Endothelial cell of umbilical vein (primary cell): ENCODE measurements at regions of chr11 and their contacts with region 1.

Region 1: DNA sequence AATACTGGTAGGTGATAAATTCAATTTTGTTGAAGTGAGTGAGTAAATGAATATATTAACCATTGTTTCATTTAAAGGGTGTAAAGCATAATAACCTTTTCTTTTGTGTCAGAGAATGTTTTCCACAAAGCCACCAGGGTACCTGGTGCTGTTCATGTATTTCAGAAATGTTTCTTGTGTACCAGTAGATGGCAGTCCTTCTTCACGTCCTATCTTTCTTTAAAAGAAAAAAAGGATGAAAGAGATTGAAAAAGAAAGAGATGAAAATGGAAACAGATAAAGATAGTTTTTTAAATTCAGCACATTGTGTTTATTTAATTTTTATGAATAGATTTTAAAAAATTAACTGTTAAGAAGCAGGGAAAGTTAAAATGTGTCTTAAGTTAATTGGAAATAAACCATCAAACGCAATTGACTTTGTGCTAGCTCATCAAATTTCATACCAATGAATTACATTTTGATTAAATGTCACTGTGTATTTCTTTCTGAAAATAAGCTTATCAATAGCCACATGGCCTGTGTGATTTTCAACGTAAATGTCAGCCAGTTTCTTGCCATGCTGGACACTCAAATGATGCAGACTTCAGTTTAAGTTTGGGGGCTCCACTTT is 65.5 kb upstream of the CHORDC1 start:
- DNase-seq: peak; percentile 41
- H3K4me3 ChIP-seq: no peak overlapping the region
- H3K27ac ChIP-seq: no peak overlapping the region
- H3K4me1 ChIP-seq: no peaks in the 10 kb centered on the region
- H3K27me3 ChIP-seq: no peaks in the 10 kb centered on the region
- CTCF ChIP-seq: peak in 1 of 2 donors; percentile 32
- POLR2A ChIP-seq: no peak

Region 2: GRCh38 chr11:90218606-90219005 is 69.7 kb before region 1 on chr11:
- CTCF ChIA-PET with region 1: no interaction called
- POLR2A ChIA-PET with region 1: no interaction called
- dilution Hi-C with region 1: no loop called
- intact Hi-C with region 1: no loop called
- DNase-seq: no peak
- H3K4me3 ChIP-seq: no peak overlapping the region
- H3K27ac ChIP-seq: no peak overlapping the region
- H3K4me1 ChIP-seq: peaks cover 21% of the 10 kb centered on the region
- H3K27me3 ChIP-seq: no peaks in the 10 kb centered on the region
- CTCF ChIP-seq: no peak
- POLR2A ChIP-seq: no peak

Region 3: DNA sequence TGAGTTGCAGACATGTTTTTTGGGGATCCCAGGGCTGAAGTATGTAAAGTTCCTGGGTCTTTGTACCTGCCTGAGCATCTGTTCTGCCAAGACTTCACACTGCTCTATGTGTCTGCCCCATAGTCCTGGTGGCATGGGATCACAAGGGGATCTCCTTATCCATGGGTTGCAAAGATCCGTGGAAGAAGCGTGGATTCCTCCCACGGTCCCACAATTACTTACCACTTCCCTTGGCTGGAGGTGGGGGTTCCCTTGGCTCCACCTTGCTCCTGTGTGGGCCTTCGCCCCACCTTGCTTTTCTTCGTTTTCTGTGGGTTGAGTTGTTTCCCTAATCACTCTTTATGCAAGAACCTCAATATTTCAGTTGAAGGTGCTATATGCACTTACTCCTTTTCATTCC is 91.9 kb after region 1 on chr11:
- CTCF ChIA-PET with region 1: no interaction called
- POLR2A ChIA-PET with region 1: no interaction called
- dilution Hi-C with region 1: no loop called
- intact Hi-C with region 1: no loop called
- DNase-seq: no peak
- H3K4me3 ChIP-seq: no peak overlapping the region
- H3K27ac ChIP-seq: no peak overlapping the region
- H3K4me1 ChIP-seq: no peaks in the 10 kb centered on the region
- H3K27me3 ChIP-seq: no peaks in the 10 kb centered on the region
- CTCF ChIP-seq: no peak
- POLR2A ChIP-seq: no peak

Region 4: GRCh38 chr11:90434858-90435257 is 146.5 kb after region 1 on chr11:
- CTCF ChIA-PET with region 1: interaction called, 16 read pairs
- POLR2A ChIA-PET with region 1: no interaction called
- dilution Hi-C with region 1: no loop called
- intact Hi-C with region 1: loop called (anchors 1 kb)
- DNase-seq: peak; percentile 49
- H3K4me3 ChIP-seq: no peak overlapping the region
- H3K27ac ChIP-seq: no peak overlapping the region
- H3K4me1 ChIP-seq: no peaks in the 10 kb centered on the region
- H3K27me3 ChIP-seq: no peaks in the 10 kb centered on the region
- CTCF ChIP-seq: peak in 1 of 2 donors; percentile 21
- POLR2A ChIP-seq: no peak